ENCODE measurements at regions of chr12 and their contacts with region 1.

Region 1: DNA sequence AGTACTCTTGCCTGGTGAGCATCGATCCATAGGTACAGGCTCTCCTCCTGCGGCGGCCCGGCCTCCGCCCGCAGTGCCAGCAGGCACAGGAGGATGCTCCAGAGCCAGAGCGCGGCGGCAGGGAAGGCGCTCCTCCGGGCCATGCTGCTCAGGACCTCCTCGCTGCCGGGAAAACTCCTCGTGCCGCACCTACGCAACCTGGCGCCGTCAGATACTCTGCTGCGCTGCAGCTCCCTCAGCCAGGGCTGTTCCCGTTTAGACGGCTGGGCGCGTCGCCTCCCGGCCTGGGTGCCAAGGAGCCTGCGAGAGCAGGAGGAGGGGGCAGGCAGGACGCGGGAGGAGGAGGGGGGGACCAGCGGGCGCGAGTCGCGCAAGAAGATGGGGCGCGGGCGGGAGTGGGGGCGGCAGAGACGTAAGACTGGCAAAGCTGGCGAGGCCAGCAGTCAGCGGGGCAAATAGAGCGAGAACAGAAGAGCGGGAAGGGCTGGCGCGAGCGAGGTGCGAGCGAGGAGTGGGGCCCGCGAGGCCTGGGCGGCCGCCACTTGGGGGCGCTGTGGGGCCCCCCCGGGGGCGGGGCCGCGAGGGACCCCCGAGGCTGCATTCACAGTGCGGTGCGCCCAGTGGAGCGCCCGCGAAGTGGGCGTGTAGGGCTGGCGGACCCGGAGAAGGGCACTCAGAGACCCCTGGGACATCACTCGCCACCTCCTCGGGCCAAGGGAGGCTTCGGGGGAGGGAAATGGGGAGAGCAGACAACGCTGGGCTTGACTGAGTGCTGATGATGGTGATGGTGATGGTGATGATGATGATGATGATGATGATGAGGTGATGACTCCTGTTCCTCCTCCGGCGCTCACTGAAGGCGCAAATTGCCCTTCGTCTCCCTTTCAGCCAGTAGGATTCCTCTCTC is at the start of gene WIF1:
- DNase-seq: peak; percentile 21 to 58
- ATAC-seq: no peak
- H3K4me3 ChIP-seq: peak within 1 kb of the TSS; percentile 45
- H3K27ac ChIP-seq: no peak within 1 kb of the TSS
- H3K4me1 ChIP-seq: no peaks in the 10 kb centered on the region
- H3K27me3 ChIP-seq: peaks cover 10 to 70% (median 13%) of the 10 kb centered on the region in 3 donors
- CTCF ChIP-seq: no peak
- total RNA-seq, gene WIF1: not detected

Region 2: DNA sequence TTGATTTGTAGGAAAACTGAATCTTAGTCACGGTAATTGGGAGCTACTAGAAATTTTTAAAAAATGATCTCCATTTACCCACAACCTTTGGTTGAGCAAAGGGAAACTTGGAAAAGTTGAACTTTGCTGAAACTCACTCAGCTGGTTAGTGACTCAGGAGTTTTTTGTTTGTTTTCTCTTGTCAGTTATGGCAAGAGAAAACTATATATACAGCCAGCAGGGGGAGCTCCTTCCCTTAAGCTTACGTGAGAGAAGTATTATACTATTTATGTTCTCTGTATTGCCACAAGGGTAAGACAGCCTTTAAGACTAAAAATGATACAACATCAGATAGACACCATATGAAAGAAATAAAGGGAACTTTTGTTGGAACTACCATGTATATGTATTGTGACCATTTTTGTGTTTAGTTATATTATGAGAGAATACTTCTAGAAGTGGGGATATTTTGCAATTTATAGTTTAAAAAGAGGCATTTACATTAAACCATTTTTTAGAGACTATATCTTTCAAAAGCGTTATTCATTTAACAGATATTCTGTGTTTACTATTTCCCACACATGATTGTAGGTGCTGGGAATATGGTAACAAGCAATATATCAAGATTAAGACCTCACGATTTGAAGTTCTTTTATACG is 325.0 kb before region 1 on chr12:
- intact Hi-C with region 1: loop called in 1 of 2 experiments (anchors 10 kb)
- DNase-seq: no peak
- ATAC-seq: peak; percentile 66 to 93 (median 77)
- H3K4me3 ChIP-seq: no peak overlapping the region
- H3K27ac ChIP-seq: no peak overlapping the region
- H3K4me1 ChIP-seq: no peaks in the 10 kb centered on the region
- H3K27me3 ChIP-seq: no peaks in the 10 kb centered on the region
- CTCF ChIP-seq: peak; percentile 79

Measured in psoas muscle (tissue), 8 donors.